ENCODE measurements at regions of chr1 and their contacts with region 1.

Region 1: DNA sequence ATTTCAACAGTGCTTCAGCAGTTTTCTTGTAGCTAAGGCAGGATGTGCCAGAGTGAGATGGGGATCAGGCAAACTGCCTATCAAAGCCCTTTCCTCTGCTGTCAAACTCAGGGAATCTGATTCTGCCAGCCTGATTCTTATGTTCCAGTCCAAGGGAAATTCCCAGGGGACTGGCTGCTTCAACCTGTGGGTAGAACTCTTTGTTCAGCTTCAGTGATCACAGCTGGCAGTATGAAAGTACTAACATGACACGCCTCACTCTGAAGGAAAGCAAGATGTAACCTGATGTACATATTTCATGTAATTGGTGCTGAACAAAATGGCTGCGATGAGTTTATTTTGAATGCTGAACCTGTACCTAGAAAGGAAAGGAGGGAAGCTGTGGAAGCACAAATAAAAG is 40.1 kb upstream of the SLC5A9 start:
- DNase-seq: no peak
- H3K4me3 ChIP-seq: no peak overlapping the region
- CTCF ChIP-seq: no peak

Region 2: GRCh38 chr1:48093696-48094528 is 88.5 kb before region 1 on chr1:
- in situ Hi-C with region 1: no loop called
- DNase-seq: peak; percentile 12
- H3K4me3 ChIP-seq: no peak overlapping the region
- CTCF ChIP-seq: peak; percentile 81

Region 3: GRCh38 chr1:48242141-48242736 is 59.8 kb after region 1 on chr1:
- in situ Hi-C with region 1: loop called (anchors 5 kb)
- DNase-seq: no peak
- H3K4me3 ChIP-seq: no peak overlapping the region
- CTCF ChIP-seq: no peak

Region 4: GRCh38 chr1:48266576-48266975 is 84.1 kb after region 1 on chr1:
- in situ Hi-C with region 1: no loop called
- DNase-seq: no peak
- H3K4me3 ChIP-seq: no peak overlapping the region
- CTCF ChIP-seq: no peak